ENCODE measurements at regions of chr3 and their contacts with region 1.

Region 1: DNA sequence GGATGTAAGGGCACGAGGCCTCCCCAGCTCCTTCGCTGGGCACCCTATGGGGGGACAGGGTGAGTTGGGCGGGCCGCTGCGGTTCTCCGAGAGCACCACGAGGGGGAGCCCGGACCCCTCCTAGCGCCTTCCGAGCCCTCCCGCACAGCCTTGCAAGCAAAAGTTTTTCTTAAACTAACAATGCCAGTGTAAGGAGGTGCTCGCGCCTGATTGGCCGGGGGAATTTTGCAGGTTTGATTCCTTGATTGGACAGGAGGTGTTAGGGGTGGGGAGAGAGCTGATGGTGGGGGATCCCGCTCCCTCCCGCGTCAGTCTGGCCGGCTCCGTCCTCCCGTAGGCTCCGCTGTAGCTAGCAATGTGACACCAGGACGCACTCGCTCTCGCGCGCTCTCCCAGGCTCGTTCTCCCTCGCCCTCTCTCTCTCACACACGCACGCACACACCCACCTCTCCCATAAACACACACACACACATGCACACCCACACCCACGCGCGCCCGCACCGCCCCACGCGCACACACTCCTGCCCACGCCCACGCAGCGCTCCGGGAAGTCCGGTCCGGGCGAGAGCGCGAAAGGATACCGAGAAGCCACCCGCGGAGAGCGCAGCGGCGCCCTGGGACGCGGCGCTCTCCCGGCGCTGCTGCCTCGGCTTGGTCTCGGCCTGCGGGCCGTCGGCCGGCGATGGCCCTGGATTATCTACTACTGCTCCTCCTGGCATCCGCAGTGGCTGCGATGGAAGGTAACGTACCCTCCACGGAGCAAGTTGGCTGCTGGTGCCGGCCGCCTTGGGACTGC is at the start of gene EPHB1:
- DNase-seq: peak; percentile 79 to 80
- ATAC-seq: peak; percentile 86 to 96 (median 92)
- H3K4me3 ChIP-seq: peak within 1 kb of the TSS; percentile 12 to 67 (median 58)
- H3K27ac ChIP-seq: peak within 1 kb of the TSS in 1 of 10 donors; percentile 4
- H3K4me1 ChIP-seq: peaks cover 10 to 30% (median 21%) of the 10 kb centered on the region in 9 donors
- H3K27me3 ChIP-seq: peaks cover 0 to 45% (median 34%) of the 10 kb centered on the region in 7 donors
- CTCF ChIP-seq: peak; percentile 88 to 97 (median 94)
- total RNA-seq, gene EPHB1: 1.1 to 3.4 (median 1.8) TPM

Region 2: GRCh38 chr3:135503760-135504686 is 708.9 kb after region 1 on chr3:
- intact Hi-C with region 1: loop called (anchors 1 to 10 kb)
- DNase-seq: peak; percentile 47 to 63
- ATAC-seq: peak; percentile 46 to 85 (median 70)
- H3K4me3 ChIP-seq: no peak overlapping the region
- H3K27ac ChIP-seq: no peak overlapping the region
- H3K4me1 ChIP-seq: peaks cover 0 to 4% (median 0%) of the 10 kb centered on the region in 9 donors
- H3K27me3 ChIP-seq: peaks cover 0 to 53% (median 31%) of the 10 kb centered on the region in 7 donors
- CTCF ChIP-seq: peak; percentile 40 to 74 (median 64)

Region 3: GRCh38 chr3:135887220-135887619 is 1092.1 kb after region 1 on chr3:
- intact Hi-C with region 1: loop called in 1 of 10 experiments (anchors 5 kb)
- DNase-seq: no peak
- ATAC-seq: no peak
- H3K4me3 ChIP-seq: no peak overlapping the region
- H3K27ac ChIP-seq: no peak overlapping the region
- H3K4me1 ChIP-seq: no peaks in the 10 kb centered on the region
- H3K27me3 ChIP-seq: no peaks in the 10 kb centered on the region
- CTCF ChIP-seq: no peak

Region 4: GRCh38 chr3:136036306-136036705 is 1241.2 kb after region 1 on chr3:
- intact Hi-C with region 1: loop called in 2 of 10 experiments (anchors 10 kb)
- DNase-seq: no peak
- ATAC-seq: no peak
- H3K4me3 ChIP-seq: no peak overlapping the region
- H3K27ac ChIP-seq: no peak overlapping the region
- H3K4me1 ChIP-seq: peaks cover 0 to 8% (median 0%) of the 10 kb centered on the region in 9 donors
- H3K27me3 ChIP-seq: no peaks in the 10 kb centered on the region
- CTCF ChIP-seq: no peak

Measured in heart right ventricle (tissue), 16 donors.